Mammary epithelial cell (primary cell): ENCODE measurements at regions of chr9 and their contacts with region 1.

Region 1: DNA sequence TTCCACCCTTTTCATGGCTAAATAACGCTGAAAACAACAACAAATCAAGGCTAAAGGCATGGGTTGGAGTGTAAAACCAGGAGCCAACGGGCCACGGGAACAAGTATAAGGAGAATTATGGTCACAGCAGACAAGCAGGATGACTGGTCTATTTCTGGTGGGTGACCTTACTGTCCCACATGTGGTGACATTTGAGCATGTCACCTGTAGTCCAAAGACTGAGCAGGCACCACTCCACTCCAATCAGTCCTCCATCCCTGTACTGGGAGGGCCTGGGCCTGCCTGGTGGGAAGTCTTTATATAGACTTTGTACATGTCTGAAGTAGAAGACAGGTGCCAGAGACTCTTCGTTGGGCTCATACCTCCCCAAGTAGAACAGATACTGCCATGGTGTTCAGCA is 36.8 kb downstream of the C9orf153 start:
- DNase-seq: no peak
- H3K4me3 ChIP-seq: no peak overlapping the region
- H3K27ac ChIP-seq: no peak overlapping the region
- H3K4me1 ChIP-seq: no peaks in the 10 kb centered on the region
- H3K27me3 ChIP-seq: no peaks in the 10 kb centered on the region
- CTCF ChIP-seq: no peak

Region 2: GRCh38 chr9:85319936-85320656 is 902.6 kb before region 1 on chr9:
- CTCF ChIA-PET with region 1: no interaction called
- dilution Hi-C with region 1: no loop called
- in situ Hi-C with region 1: no loop called
- intact Hi-C with region 1: no loop called
- DNase-seq: no peak
- H3K4me3 ChIP-seq: no peak overlapping the region
- H3K27ac ChIP-seq: no peak overlapping the region
- H3K4me1 ChIP-seq: no peaks in the 10 kb centered on the region
- H3K27me3 ChIP-seq: peaks cover 2% of the 10 kb centered on the region
- CTCF ChIP-seq: no peak

Region 3: DNA sequence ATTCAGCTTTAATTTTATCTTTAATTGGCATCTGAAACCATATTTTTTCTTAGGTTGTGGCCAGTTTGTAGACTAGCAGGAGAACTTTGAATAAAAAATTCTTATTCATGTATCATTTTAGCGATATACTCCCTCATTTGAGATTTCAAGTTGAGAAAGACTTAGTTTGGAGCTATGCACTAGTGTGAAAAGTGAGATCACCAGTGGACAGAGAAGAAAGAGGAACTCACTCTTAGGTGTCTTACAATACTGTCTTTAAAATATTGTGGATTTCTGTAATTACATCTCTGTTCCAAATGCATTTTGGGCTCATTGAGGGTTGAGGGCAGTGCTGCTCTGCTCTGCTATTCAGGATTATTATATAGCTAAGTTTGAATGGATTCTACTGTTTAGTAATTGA is 227.1 kb before region 1 on chr9:
- CTCF ChIA-PET with region 1: no interaction called
- dilution Hi-C with region 1: no loop called
- in situ Hi-C with region 1: no loop called
- intact Hi-C with region 1: no loop called
- DNase-seq: no peak
- H3K4me3 ChIP-seq: no peak overlapping the region
- H3K27ac ChIP-seq: no peak overlapping the region
- H3K4me1 ChIP-seq: no peaks in the 10 kb centered on the region
- H3K27me3 ChIP-seq: no peaks in the 10 kb centered on the region
- CTCF ChIP-seq: no peak

Region 4: DNA sequence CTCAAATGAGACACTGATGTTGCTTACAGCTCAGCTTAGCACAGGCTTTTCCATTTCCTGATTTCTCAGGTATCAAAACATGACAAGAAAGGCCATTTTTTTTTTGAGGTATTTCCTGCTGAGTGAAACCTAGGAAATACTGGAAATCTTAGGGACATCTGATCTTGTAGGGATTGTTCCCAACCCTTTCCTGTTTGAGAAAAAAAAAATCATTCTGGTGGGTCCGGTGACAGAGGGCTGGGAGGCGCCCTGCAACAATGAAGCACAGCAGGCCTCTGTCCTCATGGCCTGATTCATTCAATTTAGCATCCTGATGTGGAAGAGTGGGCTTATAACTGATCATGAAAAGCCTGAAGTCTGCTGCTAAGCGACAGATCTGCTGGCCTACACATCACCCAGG is 39.8 kb after region 1 on chr9:
- CTCF ChIA-PET with region 1: no interaction called
- dilution Hi-C with region 1: loop called (anchors 5 kb)
- in situ Hi-C with region 1: no loop called
- intact Hi-C with region 1: no loop called
- DNase-seq: no peak
- H3K4me3 ChIP-seq: no peak overlapping the region
- H3K27ac ChIP-seq: no peak overlapping the region
- H3K4me1 ChIP-seq: no peaks in the 10 kb centered on the region
- H3K27me3 ChIP-seq: no peaks in the 10 kb centered on the region
- CTCF ChIP-seq: no peak

Region 5: DNA sequence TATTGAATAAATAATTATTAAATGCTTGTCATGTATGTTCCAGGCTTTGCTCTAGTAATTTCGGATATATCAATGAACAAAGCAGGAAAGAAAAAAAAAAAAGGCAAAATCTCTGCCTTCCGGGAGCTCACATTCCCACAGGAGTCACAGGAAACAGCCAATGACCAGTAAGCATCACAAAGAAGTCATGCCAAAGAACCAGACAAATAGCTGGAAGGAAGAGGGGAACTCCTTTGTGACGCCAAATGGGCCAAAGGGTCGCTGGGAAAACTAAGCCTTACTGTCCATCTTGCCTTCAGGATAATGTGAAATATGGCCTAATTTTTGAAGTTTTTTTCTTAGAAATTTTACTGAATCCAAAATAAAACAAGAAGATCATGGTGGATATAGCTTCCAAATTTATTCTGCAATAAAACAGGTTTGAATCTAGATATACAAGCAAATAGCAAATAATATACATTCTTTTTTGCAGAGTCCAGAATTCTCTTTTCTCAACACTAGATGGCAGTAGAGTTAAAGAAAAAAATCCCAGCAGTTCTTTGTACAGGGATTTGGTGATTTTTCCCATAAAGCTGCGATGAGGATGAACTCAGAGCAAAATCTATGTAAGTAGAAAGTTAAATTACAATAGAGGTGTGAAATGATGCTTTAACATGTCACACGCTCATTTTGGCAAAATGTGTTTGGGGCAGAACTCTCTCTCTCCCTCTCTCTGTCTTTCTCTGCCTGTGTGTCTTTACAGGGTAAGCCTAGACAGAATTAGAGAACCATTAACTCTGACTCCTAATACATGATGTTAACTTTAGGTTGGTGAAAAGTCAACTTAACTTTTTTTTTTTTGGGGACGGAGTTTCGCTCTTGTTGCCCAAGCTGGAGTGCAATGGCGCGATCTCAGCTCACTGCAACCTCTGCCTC is 191.6 kb after region 1 on chr9:
- CTCF ChIA-PET with region 1: no interaction called
- dilution Hi-C with region 1: no loop called
- in situ Hi-C with region 1: no loop called
- intact Hi-C with region 1: no loop called
- DNase-seq: no peak
- H3K4me3 ChIP-seq: no peak overlapping the region
- H3K27ac ChIP-seq: no peak overlapping the region
- H3K4me1 ChIP-seq: no peaks in the 10 kb centered on the region
- H3K27me3 ChIP-seq: no peaks in the 10 kb centered on the region
- CTCF ChIP-seq: peak; percentile 59 to 61